Gastrocnemius medialis (tissue), 4 donors: ENCODE measurements at regions of chr6 and their contacts with region 1.

Region 1: DNA sequence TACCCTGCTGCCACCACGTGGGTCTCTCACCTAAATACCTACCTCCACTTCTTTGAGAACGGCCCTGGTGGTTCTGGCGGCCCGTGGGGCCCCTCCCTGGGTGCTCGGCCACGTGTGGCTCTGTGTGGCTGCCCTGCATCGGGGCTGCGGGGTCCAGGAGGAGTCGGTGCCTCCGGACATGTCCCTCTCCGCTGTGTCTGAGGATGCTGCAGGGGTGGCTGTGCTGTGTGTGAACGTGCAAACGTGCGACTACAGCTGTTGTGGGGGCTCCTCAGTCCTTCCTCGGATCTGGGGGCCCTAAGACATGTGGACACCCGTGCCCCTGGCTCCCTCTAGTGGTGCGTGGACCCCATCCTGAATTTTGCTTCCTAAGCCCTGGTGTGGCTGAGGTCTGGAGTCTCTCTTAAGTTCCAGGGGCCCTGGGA is 691.8 kb downstream of the QKI start:
- DNase-seq: peak in 1 of 2 donors; percentile 75
- ATAC-seq: no peak
- H3K4me3 ChIP-seq: no peak overlapping the region
- H3K27ac ChIP-seq: peak overlapping the region; percentile 95 to 98 (median 98)
- H3K4me1 ChIP-seq: peaks cover 56 to 66% of the 10 kb centered on the region in 2 donors
- H3K27me3 ChIP-seq: no peaks in the 10 kb centered on the region
- CTCF ChIP-seq: peak; percentile 38 to 67 (median 57)
- POLR2A ChIP-seq: no peak

Region 2: GRCh38 chr6:163170294-163170883 is 936.0 kb before region 1 on chr6:
- in situ Hi-C with region 1: loop called in 2 of 4 experiments (anchors 10 kb)
- intact Hi-C with region 1: no loop called
- DNase-seq: no peak
- ATAC-seq: no peak
- H3K4me3 ChIP-seq: no peak overlapping the region
- H3K27ac ChIP-seq: no peak overlapping the region
- H3K4me1 ChIP-seq: no peaks in the 10 kb centered on the region
- H3K27me3 ChIP-seq: no peaks in the 10 kb centered on the region
- CTCF ChIP-seq: peak; percentile 30 to 51 (median 41)
- POLR2A ChIP-seq: no peak

Region 3: GRCh38 chr6:163296835-163297519 is 809.4 kb before region 1 on chr6:
- in situ Hi-C with region 1: no loop called
- intact Hi-C with region 1: loop called (anchors 5 kb)
- DNase-seq: peak; percentile 65 to 69
- ATAC-seq: peak; percentile 93 to 96
- H3K4me3 ChIP-seq: no peak overlapping the region
- H3K27ac ChIP-seq: peak overlapping the region; percentile 66 to 80 (median 72)
- H3K4me1 ChIP-seq: peaks cover 30 to 33% of the 10 kb centered on the region in 2 donors
- H3K27me3 ChIP-seq: no peaks in the 10 kb centered on the region
- CTCF ChIP-seq: no peak
- POLR2A ChIP-seq: no peak

Region 4: DNA sequence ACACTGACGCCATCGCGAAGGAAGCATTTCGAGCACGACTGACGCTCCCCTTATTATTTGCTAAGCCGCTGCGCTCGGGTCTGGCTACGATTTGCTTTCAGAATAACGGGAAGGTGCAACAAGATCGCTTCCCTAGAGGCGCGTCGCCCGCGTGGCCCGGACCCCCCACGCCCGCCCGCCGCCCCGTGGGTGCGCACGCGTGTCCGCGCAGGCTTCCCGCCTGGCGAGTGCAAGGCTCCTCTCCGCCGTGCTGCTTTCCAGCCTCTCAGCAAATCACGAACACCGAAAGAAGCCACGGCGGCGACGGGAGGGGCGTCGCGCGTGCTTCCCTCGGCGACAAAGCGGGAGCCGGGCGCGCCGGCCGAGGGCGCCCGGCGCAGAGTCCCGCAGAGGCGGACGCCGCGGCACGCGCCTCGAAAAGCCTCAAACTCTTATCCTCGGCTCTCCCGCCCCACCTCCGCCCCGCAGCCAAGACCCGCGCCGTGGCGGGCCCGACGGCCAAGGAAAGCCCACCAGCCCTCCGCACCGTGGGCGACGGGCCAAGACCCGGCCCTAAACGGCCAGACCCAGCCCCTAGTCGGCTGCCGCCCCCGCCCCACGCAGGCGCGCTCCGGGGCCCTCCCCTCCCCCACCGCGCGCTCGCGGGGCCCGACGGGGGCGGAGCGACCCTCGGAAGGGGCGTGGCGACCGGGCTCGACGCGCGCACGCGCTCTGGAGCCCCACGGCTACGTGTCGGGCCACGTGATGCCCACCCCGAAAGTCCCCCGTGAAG is 692.8 kb before region 1 on chr6:
- in situ Hi-C with region 1: no loop called
- intact Hi-C with region 1: loop called (anchors 2 kb)
- DNase-seq: peak; percentile 81 to 86
- ATAC-seq: peak; percentile 60 to 62
- H3K4me3 ChIP-seq: peak overlapping the region; percentile 76 to 89 (median 80)
- H3K27ac ChIP-seq: peak overlapping the region; percentile 96 to 99 (median 99)
- H3K4me1 ChIP-seq: peaks cover 0 to 11% of the 10 kb centered on the region in 2 donors
- H3K27me3 ChIP-seq: no peaks in the 10 kb centered on the region
- CTCF ChIP-seq: peak in 2 of 5 experiments; percentile 7 to 12
- POLR2A ChIP-seq: peak; percentile 96 to 98

Region 5: DNA sequence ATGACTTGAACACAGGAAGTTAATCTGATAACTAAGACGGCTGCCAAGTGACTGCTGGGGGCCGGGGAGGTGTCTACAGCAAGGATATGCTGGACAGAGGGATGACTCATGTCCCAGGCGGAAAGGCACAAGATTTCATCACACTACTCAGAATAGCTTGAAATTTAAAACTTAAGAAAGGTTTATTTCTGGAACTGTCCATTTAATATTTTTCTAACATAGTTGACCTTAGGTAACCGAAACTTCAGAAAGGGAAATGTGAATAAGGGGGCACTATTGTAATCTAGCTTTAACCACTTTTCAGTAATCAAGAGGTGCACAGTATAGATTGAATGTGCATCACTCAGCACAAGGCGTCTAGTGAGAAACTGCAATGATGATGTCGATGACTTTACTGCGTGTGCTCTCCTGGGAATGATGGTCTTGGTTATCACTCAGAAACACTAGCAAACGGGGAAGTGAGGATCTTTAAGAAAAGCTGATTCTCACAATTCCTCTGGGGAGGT is 520.4 kb before region 1 on chr6:
- in situ Hi-C with region 1: loop called in 3 of 4 experiments (anchors 10 to 25 kb)
- intact Hi-C with region 1: loop called (anchors 2 kb)
- DNase-seq: peak; percentile 87 to 93
- ATAC-seq: peak; percentile 85 to 88
- H3K4me3 ChIP-seq: peak overlapping the region in 3 of 4 donors; percentile 14 to 24 (median 24)
- H3K27ac ChIP-seq: peak overlapping the region; percentile 81 to 88 (median 86)
- H3K4me1 ChIP-seq: peaks cover 43 to 55% of the 10 kb centered on the region in 2 donors
- H3K27me3 ChIP-seq: no peaks in the 10 kb centered on the region
- CTCF ChIP-seq: no peak
- POLR2A ChIP-seq: peak; percentile 39 to 52

Region 6: GRCh38 chr6:163814494-163815364 is 291.6 kb before region 1 on chr6:
- in situ Hi-C with region 1: no loop called
- intact Hi-C with region 1: loop called (anchors 2 kb)
- DNase-seq: peak; percentile 22 to 48
- ATAC-seq: peak; percentile 97 to 99
- H3K4me3 ChIP-seq: no peak overlapping the region
- H3K27ac ChIP-seq: peak overlapping the region; percentile 76 to 87 (median 84)
- H3K4me1 ChIP-seq: peaks cover 19 to 20% of the 10 kb centered on the region in 2 donors
- H3K27me3 ChIP-seq: no peaks in the 10 kb centered on the region
- CTCF ChIP-seq: peak; percentile 40 to 55 (median 48)
- POLR2A ChIP-seq: no peak

Region 7: GRCh38 chr6:165231581-165232561 is 1125.5 kb after region 1 on chr6:
- in situ Hi-C with region 1: loop called in 1 of 4 experiments (anchors 5 kb)
- intact Hi-C with region 1: no loop called
- DNase-seq: peak; percentile 22 to 51
- ATAC-seq: peak; percentile 92 to 96
- H3K4me3 ChIP-seq: peak overlapping the region; percentile 2 to 37 (median 18)
- H3K27ac ChIP-seq: peak overlapping the region; percentile 79 to 86 (median 84)
- H3K4me1 ChIP-seq: peaks cover 13 to 18% of the 10 kb centered on the region in 2 donors
- H3K27me3 ChIP-seq: no peaks in the 10 kb centered on the region
- CTCF ChIP-seq: peak; percentile 57 to 76 (median 74)
- POLR2A ChIP-seq: no peak